Gastrocnemius medialis (tissue), 4 donors: ENCODE measurements at regions of chr1 and their contacts with region 1.

Region 1: DNA sequence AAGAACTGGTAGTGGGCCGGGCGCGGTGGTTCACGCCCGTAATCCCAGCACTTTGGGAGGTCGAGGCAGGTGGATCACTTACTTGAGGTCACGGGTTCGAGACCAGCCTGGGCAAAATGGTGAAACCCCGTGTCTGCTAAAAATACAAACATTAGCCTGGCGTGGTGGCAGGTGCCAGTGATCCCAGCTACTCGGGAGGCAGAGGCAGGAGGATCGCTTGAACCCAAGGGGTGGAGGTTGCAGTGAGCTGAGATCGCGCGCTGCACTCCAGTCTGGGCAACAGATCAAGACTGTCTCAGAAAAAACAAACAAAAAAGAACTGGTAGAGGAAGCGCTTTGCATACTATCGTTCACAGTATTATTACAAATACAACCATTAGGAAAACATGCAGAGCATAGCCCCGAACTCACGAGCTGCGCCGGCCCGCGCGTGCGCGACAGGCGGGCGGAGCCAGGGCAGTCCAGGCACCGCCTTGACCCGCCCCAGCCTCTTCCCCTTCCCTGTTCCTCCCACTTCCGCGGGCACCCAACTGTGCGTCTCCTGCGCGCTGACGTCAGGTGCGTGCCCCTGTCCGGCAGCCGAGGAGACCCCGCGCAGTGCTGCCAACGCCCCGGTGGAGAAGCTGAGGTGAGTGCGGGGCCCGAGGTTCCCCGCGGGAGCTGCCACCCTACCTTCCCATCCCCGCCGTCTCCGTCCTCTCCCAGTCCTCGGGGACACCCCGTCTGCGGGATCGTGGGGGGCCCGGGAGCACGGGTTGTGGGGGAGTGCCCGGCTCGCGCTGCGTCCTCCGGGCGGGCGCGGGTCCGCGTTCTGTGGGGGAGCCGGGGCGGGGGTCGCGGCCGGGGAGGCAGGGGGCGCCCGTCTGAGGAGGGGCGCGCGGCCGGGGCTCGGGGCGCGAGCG is at the start of gene CDC42:
- DNase-seq: peak; percentile 96 to 98
- ATAC-seq: peak; percentile 93 to 94
- H3K4me3 ChIP-seq: peak within 1 kb of the TSS; percentile 63 to 81 (median 72)
- H3K27ac ChIP-seq: peak within 1 kb of the TSS; percentile 94 to 99 (median 96)
- H3K4me1 ChIP-seq: peaks cover 36 to 38% of the 10 kb centered on the region in 2 donors
- H3K27me3 ChIP-seq: no peaks in the 10 kb centered on the region
- CTCF ChIP-seq: no peak
- POLR2A ChIP-seq: peak; percentile 96 to 99
- total RNA-seq, gene CDC42: 77.0 to 111 (median 108) TPM

Region 2: GRCh38 chr1:21165646-21166045 is 886.7 kb before region 1 on chr1:
- in situ Hi-C with region 1: no loop called
- intact Hi-C with region 1: no loop called
- DNase-seq: no peak
- ATAC-seq: no peak
- H3K4me3 ChIP-seq: no peak overlapping the region
- H3K27ac ChIP-seq: peak overlapping the region in 2 of 4 donors; percentile 47 to 58
- H3K4me1 ChIP-seq: peaks cover 27 to 35% of the 10 kb centered on the region in 2 donors
- H3K27me3 ChIP-seq: no peaks in the 10 kb centered on the region
- CTCF ChIP-seq: no peak
- POLR2A ChIP-seq: no peak

Region 3: GRCh38 chr1:21931171-21932093 is 120.9 kb before region 1 on chr1:
- in situ Hi-C with region 1: no loop called
- intact Hi-C with region 1: no loop called
- DNase-seq: peak in 1 of 2 donors; percentile 67
- ATAC-seq: no peak
- H3K4me3 ChIP-seq: peak overlapping the region in 3 of 4 donors; percentile 14 to 36 (median 25)
- H3K27ac ChIP-seq: peak overlapping the region; percentile 81 to 89 (median 88)
- H3K4me1 ChIP-seq: peaks cover 51 to 80% of the 10 kb centered on the region in 2 donors
- H3K27me3 ChIP-seq: no peaks in the 10 kb centered on the region
- CTCF ChIP-seq: no peak
- POLR2A ChIP-seq: peak in 1 of 2 donors; percentile 14

Region 4: GRCh38 chr1:22025368-22026155 is 26.8 kb before region 1 on chr1:
- in situ Hi-C with region 1: no loop called
- intact Hi-C with region 1: loop called (anchors 1 kb)
- DNase-seq: peak; percentile 78 to 88
- ATAC-seq: peak; percentile 95 to 96
- H3K4me3 ChIP-seq: peak overlapping the region; percentile 90 to 99 (median 96)
- H3K27ac ChIP-seq: peak overlapping the region; percentile 99 to 100 (median 100)
- H3K4me1 ChIP-seq: peaks cover 11 to 16% of the 10 kb centered on the region in 2 donors
- H3K27me3 ChIP-seq: no peaks in the 10 kb centered on the region
- CTCF ChIP-seq: no peak
- POLR2A ChIP-seq: peak; percentile 83 to 94

Region 5: DNA sequence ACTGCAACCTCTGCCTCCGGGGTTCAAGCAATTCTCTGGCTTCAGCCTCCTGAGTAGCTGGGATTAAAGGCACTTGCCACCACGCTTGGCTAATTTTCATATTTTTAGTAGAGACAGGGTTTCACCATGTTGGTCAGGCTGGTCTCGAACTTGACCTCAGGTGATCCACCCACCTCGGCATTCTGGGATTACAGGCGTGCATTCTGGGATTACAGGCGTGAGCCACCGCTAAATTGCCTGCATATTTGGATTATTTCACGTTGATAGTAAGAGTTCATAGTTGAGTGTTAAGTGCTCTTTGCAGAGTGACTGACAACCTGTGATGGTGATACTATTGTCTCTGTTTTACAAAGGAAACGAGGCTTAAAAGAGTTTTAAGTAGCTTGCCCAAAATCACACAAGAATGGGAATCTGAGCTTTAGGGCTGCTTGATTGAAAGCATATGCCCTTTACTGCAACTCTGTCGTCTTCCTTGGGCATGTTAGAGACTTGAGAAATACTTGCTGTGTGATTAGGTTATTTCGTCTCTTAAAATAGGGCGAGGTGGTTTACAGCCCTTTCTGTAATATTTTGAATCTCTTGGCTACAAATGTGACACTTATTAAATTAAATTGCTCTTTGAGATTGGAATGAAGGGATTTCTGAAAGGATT is 12.5 kb after region 1 on chr1:
- in situ Hi-C with region 1: no loop called
- intact Hi-C with region 1: no loop called
- DNase-seq: no peak
- ATAC-seq: no peak
- H3K4me3 ChIP-seq: no peak overlapping the region
- H3K27ac ChIP-seq: no peak overlapping the region
- H3K4me1 ChIP-seq: peaks cover 88 to 98% of the 10 kb centered on the region in 2 donors
- H3K27me3 ChIP-seq: no peaks in the 10 kb centered on the region
- CTCF ChIP-seq: no peak
- POLR2A ChIP-seq: no peak

Region 6: DNA sequence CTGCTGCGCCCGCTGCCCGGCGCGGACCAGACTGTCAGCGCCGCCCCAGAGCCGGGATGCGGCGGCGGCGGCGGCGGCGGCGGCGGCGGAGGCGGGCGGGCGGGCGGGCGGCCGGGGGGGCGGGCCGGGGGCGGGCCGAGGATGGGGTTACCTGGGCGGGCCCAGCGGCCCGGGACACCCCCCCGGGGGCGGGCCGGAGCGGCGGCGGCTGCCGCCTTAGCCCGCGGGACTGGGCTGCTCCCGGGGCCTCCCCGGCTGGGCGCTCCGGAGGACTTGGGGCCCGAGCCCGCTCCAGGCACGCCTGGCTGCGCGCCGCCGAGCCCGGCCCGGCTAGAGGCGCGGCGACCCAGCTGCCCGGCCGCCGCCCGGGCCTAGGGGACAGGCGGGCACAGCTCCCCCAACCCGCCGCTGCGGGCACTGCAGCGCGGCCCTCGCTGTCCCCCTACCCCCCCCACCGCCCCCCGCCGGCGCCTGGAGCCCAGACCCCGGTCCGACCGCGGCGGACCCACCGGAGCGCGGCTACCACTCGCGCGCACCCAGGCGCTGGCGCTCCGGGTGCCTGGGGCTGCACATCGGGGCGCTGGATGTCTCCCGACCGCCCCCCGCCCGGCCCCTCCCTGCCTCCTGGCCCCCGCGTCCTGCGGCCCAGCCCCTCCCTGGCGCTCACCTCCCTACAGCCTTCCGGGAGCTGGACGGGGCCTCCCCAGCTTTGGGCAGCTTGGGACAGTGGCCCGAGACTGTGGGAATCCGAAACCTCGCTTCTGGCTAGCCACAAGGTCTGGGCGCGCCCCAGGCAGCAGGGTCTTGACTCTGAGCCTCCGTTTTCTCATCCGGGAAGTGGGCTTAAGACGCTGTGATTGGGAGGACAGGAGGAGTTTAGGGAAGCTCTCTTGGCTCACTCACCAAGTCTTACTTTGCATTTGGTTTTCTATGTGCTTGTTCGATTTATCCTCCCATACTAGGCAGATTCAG is 91.0 kb after region 1 on chr1 and contains the start of gene WNT4:
- in situ Hi-C with region 1: no loop called
- intact Hi-C with region 1: loop called (anchors 2 kb)
- DNase-seq: no peak
- ATAC-seq: peak; percentile 57 to 73
- H3K4me3 ChIP-seq: peak within 1 kb of the TSS; percentile 54 to 77 (median 62)
- H3K27ac ChIP-seq: peak within 1 kb of the TSS; percentile 57 to 66 (median 60)
- H3K4me1 ChIP-seq: peaks cover 6% of the 10 kb centered on the region in 2 donors
- H3K27me3 ChIP-seq: no peaks in the 10 kb centered on the region
- CTCF ChIP-seq: peak in 3 of 5 experiments; percentile 28 to 57 (median 33)
- POLR2A ChIP-seq: no peak
- total RNA-seq, gene WNT4: 0.42 to 1.1 TPM in 2 of 4 donors, not detected in the others

Region 7: DNA sequence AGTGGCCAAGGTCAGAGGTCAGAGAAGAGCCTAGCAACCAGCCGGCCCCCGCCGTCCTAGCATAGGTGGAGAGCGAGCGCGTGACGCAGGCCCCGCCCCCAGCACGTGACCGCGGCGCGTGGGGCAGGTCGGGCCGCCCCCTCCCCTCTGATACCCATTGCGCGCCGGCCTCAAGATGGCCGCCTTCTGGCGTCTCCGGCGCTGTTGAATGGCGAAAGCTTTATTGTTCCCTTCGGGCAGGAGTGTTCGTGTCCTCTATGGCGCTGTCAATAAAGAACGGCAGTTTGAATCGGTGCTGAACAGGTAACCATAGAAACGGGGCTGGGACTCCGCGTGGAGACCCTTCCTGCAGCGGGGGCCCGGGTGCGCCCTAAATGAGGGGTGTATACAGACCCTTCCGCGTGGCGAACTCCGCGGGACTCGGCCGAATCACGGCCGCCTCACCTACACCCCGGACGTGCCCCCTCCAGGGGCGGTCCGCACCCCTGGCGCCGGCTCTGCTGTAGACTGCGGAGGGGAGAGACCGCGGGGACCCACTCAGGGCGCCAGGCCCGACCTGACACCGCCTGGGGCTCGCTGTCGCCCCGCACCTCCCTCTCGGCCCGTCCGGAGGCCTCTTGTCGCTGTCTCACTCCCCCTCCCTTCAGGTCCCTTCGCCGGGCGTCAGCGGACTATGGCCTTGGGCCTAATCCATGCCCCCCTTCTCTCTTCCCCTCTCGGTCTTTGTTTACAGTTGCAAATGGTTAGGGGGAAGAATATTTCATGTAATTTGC is 399.5 kb after region 1 on chr1 and contains the start of gene ZBTB40:
- in situ Hi-C with region 1: no loop called
- intact Hi-C with region 1: loop called (anchors 1 kb)
- DNase-seq: peak; percentile 95 to 98
- ATAC-seq: peak; percentile 89 to 91
- H3K4me3 ChIP-seq: peak within 1 kb of the TSS; percentile 94 to 98 (median 96)
- H3K27ac ChIP-seq: peak within 1 kb of the TSS; percentile 92 to 97 (median 95)
- H3K4me1 ChIP-seq: peaks cover 39 to 42% of the 10 kb centered on the region in 2 donors
- H3K27me3 ChIP-seq: no peaks in the 10 kb centered on the region
- CTCF ChIP-seq: peak in 1 of 5 experiments; percentile 16
- POLR2A ChIP-seq: peak; percentile 35 to 58
- total RNA-seq, gene ZBTB40: 12.0 to 17.3 (median 12.5) TPM

Region 8: GRCh38 chr1:23422241-23423030 is 1370.1 kb after region 1 on chr1:
- in situ Hi-C with region 1: no loop called
- intact Hi-C with region 1: loop called (anchors 2 kb)
- DNase-seq: peak; percentile 33 to 65
- ATAC-seq: no peak
- H3K4me3 ChIP-seq: peak overlapping the region in 2 of 4 donors; percentile 68 to 72
- H3K27ac ChIP-seq: peak overlapping the region; percentile 93 to 96 (median 94)
- H3K4me1 ChIP-seq: peaks cover 66 to 79% of the 10 kb centered on the region in 2 donors
- H3K27me3 ChIP-seq: no peaks in the 10 kb centered on the region
- CTCF ChIP-seq: no peak
- POLR2A ChIP-seq: no peak